GM12878 (cell line): ENCODE measurements at regions of chr14 and their contacts with region 1.

Region 1: GRCh38 chr14:42523666-42524065 is 917.0 kb downstream of the LRFN5 start:
- DNase-seq: peak; percentile 36
- ATAC-seq: peak; percentile 85
- H3K4me3 ChIP-seq: no peak overlapping the region
- H3K27ac ChIP-seq: no peak overlapping the region
- H3K4me1 ChIP-seq: no peaks in the 10 kb centered on the region
- H3K27me3 ChIP-seq: no peaks in the 10 kb centered on the region
- CTCF ChIP-seq: no peak
- EP300 ChIP-seq: no peak
- POLR2A ChIP-seq: no peak
- RAD21 ChIP-seq: no peak

Region 2: DNA sequence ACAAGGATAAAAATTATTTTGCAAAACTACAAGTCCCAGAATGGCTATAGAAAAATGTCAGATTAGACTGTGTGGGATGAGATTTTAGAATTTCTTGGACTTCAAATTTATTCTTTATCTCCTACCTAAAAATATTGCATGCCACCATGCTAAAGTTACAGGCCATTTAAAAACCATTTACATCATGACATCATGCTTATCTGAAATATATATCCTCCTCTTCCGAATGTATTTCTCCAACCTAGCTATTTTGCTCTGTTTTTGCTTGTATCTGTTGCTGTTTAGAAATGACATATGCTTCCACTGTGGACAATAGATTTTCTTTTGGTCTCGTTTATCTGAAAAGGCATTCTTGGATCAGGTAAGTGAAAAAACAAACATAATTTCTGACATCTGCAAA is 445.3 kb before region 1 on chr14:
- CTCF ChIA-PET with region 1: no interaction called
- POLR2A ChIA-PET with region 1: no interaction called
- RAD21 ChIA-PET with region 1: no interaction called
- SMC1A ChIA-PET with region 1: no interaction called
- in situ Hi-C with region 1: no loop called
- intact Hi-C with region 1: no loop called
- DNase-seq: no peak
- ATAC-seq: no peak
- H3K4me3 ChIP-seq: no peak overlapping the region
- H3K27ac ChIP-seq: no peak overlapping the region
- H3K4me1 ChIP-seq: no peaks in the 10 kb centered on the region
- H3K27me3 ChIP-seq: no peaks in the 10 kb centered on the region
- CTCF ChIP-seq: no peak
- EP300 ChIP-seq: no peak
- POLR2A ChIP-seq: no peak
- RAD21 ChIP-seq: no peak

Region 3: GRCh38 chr14:42429009-42429800 is 94.5 kb before region 1 on chr14:
- CTCF ChIA-PET with region 1: no interaction called
- POLR2A ChIA-PET with region 1: no interaction called
- RAD21 ChIA-PET with region 1: no interaction called
- SMC1A ChIA-PET with region 1: interaction called, 11 read pairs
- in situ Hi-C with region 1: no loop called
- intact Hi-C with region 1: no loop called
- DNase-seq: peak; percentile 59
- ATAC-seq: peak; percentile 97
- H3K4me3 ChIP-seq: no peak overlapping the region
- H3K27ac ChIP-seq: no peak overlapping the region
- H3K4me1 ChIP-seq: no peaks in the 10 kb centered on the region
- H3K27me3 ChIP-seq: no peaks in the 10 kb centered on the region
- CTCF ChIP-seq: no peak
- EP300 ChIP-seq: peak; percentile 67 to 77; a peak in 3 of 4 replicates
- POLR2A ChIP-seq: no peak
- RAD21 ChIP-seq: no peak

Region 4: GRCh38 chr14:42469637-42470426 is 53.8 kb before region 1 on chr14:
- CTCF ChIA-PET with region 1: no interaction called
- POLR2A ChIA-PET with region 1: no interaction called
- RAD21 ChIA-PET with region 1: no interaction called
- SMC1A ChIA-PET with region 1: interaction called, 10 read pairs
- in situ Hi-C with region 1: no loop called
- intact Hi-C with region 1: no loop called
- DNase-seq: peak; percentile 5
- ATAC-seq: peak; percentile 85
- H3K4me3 ChIP-seq: no peak overlapping the region
- H3K27ac ChIP-seq: no peak overlapping the region
- H3K4me1 ChIP-seq: no peaks in the 10 kb centered on the region
- H3K27me3 ChIP-seq: no peaks in the 10 kb centered on the region
- CTCF ChIP-seq: no peak
- EP300 ChIP-seq: no peak
- POLR2A ChIP-seq: no peak
- RAD21 ChIP-seq: no peak

Region 5: DNA sequence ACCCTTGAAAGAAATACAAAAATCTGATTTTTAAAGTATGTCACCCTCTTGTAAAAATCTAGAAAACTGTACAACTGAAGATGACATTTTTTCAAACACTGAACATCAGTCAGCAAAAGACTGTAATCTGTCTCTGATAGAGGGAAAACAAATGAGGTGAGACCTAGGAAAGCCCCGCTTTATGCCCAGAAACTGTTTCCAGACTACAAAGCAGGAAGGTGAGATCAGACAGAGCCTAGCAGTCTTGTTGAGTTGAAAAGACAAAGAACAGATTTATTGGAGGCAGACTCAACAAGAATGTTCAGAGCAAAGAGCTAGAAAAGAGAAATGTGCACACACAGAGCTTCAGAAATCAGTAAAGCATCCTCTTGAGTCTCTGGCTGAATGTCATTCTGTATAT is 43.4 kb before region 1 on chr14:
- CTCF ChIA-PET with region 1: interaction called, 3 read pairs
- POLR2A ChIA-PET with region 1: no interaction called
- RAD21 ChIA-PET with region 1: interaction called, 10 read pairs
- SMC1A ChIA-PET with region 1: interaction called, 3 read pairs
- in situ Hi-C with region 1: no loop called
- intact Hi-C with region 1: no loop called
- DNase-seq: no peak
- ATAC-seq: peak; percentile 54
- H3K4me3 ChIP-seq: no peak overlapping the region
- H3K27ac ChIP-seq: no peak overlapping the region
- H3K4me1 ChIP-seq: no peaks in the 10 kb centered on the region
- H3K27me3 ChIP-seq: no peaks in the 10 kb centered on the region
- CTCF ChIP-seq: no peak
- EP300 ChIP-seq: no peak
- POLR2A ChIP-seq: no peak
- RAD21 ChIP-seq: no peak